ENCODE measurements at regions of chr9 and their contacts with region 1.

Region 1: GRCh38 chr9:32384364-32385151 is at the start of gene ACO1:
- DNase-seq: no peak
- H3K4me3 ChIP-seq: peak within 1 kb of the TSS; percentile 85
- CTCF ChIP-seq: no peak

Region 2: DNA sequence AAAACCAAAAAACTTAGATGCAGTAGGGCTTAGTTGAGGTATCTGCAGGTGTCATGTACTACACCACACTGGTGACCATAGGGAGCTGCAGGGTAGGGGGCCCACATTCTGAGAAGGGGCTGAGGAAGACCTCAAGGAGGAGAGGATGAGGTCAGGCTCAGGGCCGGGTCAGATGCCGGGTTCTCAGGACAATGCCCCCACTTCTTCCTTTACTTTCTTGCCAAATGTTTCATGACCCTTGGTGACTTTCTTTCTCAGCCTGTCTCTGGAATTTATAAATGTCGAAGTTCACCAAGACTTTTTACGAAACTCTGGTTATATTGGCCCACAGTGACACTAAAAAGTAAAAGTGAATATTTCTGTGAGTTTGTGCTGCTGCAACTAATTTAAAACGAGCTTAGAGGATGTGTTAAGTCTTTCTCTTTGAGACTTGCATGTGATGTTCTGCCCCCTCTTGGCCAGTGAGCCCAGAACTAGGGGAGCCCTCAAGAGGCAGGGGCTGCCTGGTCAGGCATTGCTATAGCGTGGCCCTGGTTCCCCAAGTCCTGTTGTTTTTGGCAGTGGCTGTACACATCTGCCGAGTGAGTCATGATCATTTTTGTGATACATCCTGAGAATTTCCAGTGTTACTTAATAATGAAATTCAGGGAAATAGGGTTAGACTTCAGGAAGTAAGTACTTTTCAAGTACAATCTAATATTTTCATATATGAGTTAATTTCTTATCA is 11.1 kb after region 1 on chr9:
- CTCF ChIA-PET with region 1: interaction called, 32 read pairs
- POLR2A ChIA-PET with region 1: interaction called, 12 read pairs
- DNase-seq: peak; percentile 76
- H3K4me3 ChIP-seq: no peak overlapping the region
- CTCF ChIP-seq: peak; percentile 57

Region 3: GRCh38 chr9:32558408-32558934 is 173.9 kb after region 1 on chr9:
- CTCF ChIA-PET with region 1: interaction called, 94 read pairs
- POLR2A ChIA-PET with region 1: no interaction called
- DNase-seq: no peak
- H3K4me3 ChIP-seq: no peak overlapping the region
- CTCF ChIP-seq: no peak

Region 4: GRCh38 chr9:32571969-32572899 is 187.7 kb after region 1 on chr9:
- CTCF ChIA-PET with region 1: interaction called, 1,093 read pairs
- POLR2A ChIA-PET with region 1: interaction called, 9 read pairs
- DNase-seq: no peak
- H3K4me3 ChIP-seq: peak overlapping the region; percentile 98
- CTCF ChIP-seq: peak; percentile 75

Region 5: GRCh38 chr9:32589083-32589723 is 204.6 kb after region 1 on chr9:
- CTCF ChIA-PET with region 1: interaction called, 1,093 read pairs
- POLR2A ChIA-PET with region 1: no interaction called
- DNase-seq: no peak
- H3K4me3 ChIP-seq: no peak overlapping the region
- CTCF ChIP-seq: peak; percentile 61

Measured in AG04449 (cell line).